ENCODE measurements at regions of chr5 and their contacts with region 1.

Region 1: GRCh38 chr5:34474573-34475021 is 181.5 kb upstream of the RAI14 start:
- DNase-seq: peak; percentile 77
- ATAC-seq: peak; percentile 99
- H3K4me3 ChIP-seq: no peak overlapping the region
- H3K27ac ChIP-seq: no peak overlapping the region
- H3K4me1 ChIP-seq: no peaks in the 10 kb centered on the region
- H3K27me3 ChIP-seq: peaks cover 16% of the 10 kb centered on the region
- CTCF ChIP-seq: peak; percentile 94
- POLR2A ChIP-seq: peak; percentile 45; the same call in 1 of the 2 replicates
- RAD21 ChIP-seq: peak; percentile 96

Region 2: DNA sequence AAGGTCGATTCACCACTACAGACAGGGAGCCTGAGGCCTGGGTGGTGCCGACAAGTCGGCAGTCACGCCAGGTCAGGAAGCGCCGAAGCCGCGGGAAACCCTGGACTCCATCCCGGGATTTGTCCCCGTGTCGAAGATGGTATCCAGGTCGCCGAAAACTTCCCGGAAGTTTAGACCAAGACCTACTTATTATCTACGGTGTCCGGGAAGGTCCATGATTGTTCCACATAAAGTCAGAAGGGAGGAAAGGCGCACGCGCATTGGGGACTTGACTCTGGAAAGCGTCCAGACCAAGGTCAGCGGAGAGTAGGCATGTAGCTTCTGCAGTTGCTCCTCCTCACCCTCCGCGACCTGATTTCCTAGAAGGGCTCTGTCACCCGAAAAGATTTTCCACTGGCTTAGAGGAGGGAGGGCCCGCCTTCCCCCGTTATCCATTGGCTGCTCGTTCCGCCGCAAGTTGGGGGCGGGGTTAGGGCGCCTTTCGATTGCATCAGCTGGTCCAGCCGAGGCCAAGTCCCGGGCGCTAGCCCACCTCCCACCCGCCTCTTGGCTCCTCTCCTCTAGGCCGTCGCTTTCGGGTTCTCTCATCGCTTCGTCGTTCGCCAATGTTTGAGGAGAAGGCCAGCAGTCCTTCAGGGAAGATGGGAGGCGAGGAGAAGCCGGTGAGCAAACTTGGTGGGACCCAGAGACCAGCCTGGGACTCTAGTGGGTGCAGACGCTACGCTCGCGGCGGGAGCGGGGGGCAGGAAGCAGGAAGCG is 1033.9 kb before region 1 on chr5 and contains the start of gene TARS1:
- CTCF ChIA-PET with region 1: no interaction called
- POLR2A ChIA-PET with region 1: no interaction called
- dilution Hi-C with region 1: no loop called
- in situ Hi-C with region 1: loop called (anchors 25 kb)
- intact Hi-C with region 1: no loop called
- DNase-seq: peak; percentile 100
- ATAC-seq: peak; percentile 94
- H3K4me3 ChIP-seq: peak within 1 kb of the TSS; percentile 68
- H3K27ac ChIP-seq: peak within 1 kb of the TSS; percentile 97
- H3K4me1 ChIP-seq: peaks cover 2% of the 10 kb centered on the region; the same call in 1 of the 2 replicates
- H3K27me3 ChIP-seq: no peaks in the 10 kb centered on the region
- CTCF ChIP-seq: no peak
- POLR2A ChIP-seq: peak; percentile 91
- RAD21 ChIP-seq: no peak
- total RNA-seq, gene TARS1: 175 and 219 TPM in 2 replicates

Region 3: GRCh38 chr5:34674187-34674586 is 199.6 kb after region 1 on chr5:
- CTCF ChIA-PET with region 1: no interaction called
- POLR2A ChIA-PET with region 1: no interaction called
- dilution Hi-C with region 1: no loop called
- in situ Hi-C with region 1: no loop called
- intact Hi-C with region 1: no loop called
- DNase-seq: peak; percentile 98
- ATAC-seq: peak; percentile 55
- H3K4me3 ChIP-seq: no peak overlapping the region
- H3K27ac ChIP-seq: peak overlapping the region; percentile 80; the same call in 1 of the 2 replicates
- H3K4me1 ChIP-seq: peaks cover 36% of the 10 kb centered on the region
- H3K27me3 ChIP-seq: no peaks in the 10 kb centered on the region
- CTCF ChIP-seq: no peak
- POLR2A ChIP-seq: no peak
- RAD21 ChIP-seq: no peak

Region 4: GRCh38 chr5:34811706-34812105 is 337.1 kb after region 1 on chr5:
- CTCF ChIA-PET with region 1: no interaction called
- POLR2A ChIA-PET with region 1: no interaction called
- dilution Hi-C with region 1: no loop called
- in situ Hi-C with region 1: no loop called
- intact Hi-C with region 1: no loop called
- DNase-seq: no peak
- ATAC-seq: no peak
- H3K4me3 ChIP-seq: no peak overlapping the region
- H3K27ac ChIP-seq: no peak overlapping the region
- H3K4me1 ChIP-seq: no peaks in the 10 kb centered on the region
- H3K27me3 ChIP-seq: no peaks in the 10 kb centered on the region
- CTCF ChIP-seq: no peak
- POLR2A ChIP-seq: no peak
- RAD21 ChIP-seq: no peak

Region 5: DNA sequence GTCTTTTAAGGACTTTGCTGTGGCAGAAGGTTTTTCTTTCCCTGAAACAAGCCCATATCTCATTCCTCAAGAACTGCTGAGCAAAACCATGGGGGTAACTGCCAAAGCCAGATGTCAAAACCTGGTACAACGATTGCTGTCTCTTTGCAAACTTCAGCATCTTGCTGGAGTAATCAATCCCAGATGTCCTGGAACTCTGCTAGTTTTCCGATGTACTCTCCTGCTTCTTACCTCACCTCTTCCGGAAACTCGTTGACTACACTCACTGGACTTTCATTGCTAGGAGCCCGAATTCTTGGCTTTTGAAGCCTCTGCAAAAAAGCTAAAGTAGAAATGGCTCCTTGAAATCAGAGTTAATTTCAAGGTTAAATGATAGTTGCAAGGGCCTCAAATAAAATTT is 417.4 kb after region 1 on chr5:
- CTCF ChIA-PET with region 1: interaction called, 3 read pairs
- POLR2A ChIA-PET with region 1: no interaction called
- dilution Hi-C with region 1: no loop called
- in situ Hi-C with region 1: loop called (anchors 5 kb)
- intact Hi-C with region 1: no loop called
- DNase-seq: peak; percentile 38
- ATAC-seq: no peak
- H3K4me3 ChIP-seq: no peak overlapping the region
- H3K27ac ChIP-seq: no peak overlapping the region
- H3K4me1 ChIP-seq: no peaks in the 10 kb centered on the region
- H3K27me3 ChIP-seq: peaks cover 2% of the 10 kb centered on the region; the same call in 1 of the 2 replicates
- CTCF ChIP-seq: no peak
- POLR2A ChIP-seq: no peak
- RAD21 ChIP-seq: no peak

Region 6: DNA sequence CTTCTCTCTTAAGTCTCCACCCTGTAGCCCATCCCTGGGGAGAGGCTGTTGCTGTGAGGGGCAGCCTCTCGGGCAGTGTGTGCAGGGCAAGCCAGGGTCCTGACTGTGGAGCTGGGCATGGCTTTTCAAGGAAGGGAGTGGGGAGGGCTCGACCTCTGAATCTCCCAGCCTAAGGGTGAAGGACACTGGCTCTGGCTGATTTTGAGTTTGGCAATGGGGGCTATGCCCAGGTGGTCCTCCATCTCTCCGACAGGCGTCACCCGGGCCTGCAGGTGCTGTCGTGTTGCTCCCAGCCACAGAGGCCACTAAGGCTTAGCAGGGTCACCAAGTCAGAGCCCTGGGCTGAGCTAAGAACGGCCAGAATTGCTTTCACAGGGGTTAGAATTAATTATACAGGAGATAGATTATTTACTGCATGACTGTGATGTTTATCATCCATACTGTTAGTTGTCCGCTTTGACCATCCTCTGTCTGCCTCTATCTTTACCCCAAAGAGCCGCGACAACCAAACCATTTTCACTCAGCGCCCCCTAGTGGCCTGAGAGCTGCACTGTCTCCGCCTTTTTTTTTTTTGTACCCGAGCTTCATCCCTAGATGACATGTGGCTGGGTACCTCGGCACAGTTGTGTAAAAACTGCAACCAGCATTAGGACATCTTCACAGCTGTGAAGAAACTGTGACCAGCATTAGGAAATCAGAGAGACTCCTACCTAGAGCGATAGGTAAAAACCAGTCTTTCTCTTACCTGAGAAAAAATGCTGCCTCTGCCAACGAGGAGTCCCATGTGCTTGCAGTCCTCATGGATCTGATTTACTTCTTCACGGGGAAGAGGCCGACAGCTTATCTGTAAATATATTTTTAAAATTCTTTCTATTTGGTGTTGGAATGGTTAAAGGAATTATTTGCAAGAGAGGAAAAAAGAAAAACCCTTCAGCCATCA is 528.7 kb after region 1 on chr5:
- CTCF ChIA-PET with region 1: no interaction called
- POLR2A ChIA-PET with region 1: no interaction called
- dilution Hi-C with region 1: no loop called
- in situ Hi-C with region 1: loop called (anchors 10 kb)
- intact Hi-C with region 1: loop called (anchors 2 kb)
- DNase-seq: peak; percentile 46
- ATAC-seq: peak; percentile 89
- H3K4me3 ChIP-seq: no peak overlapping the region
- H3K27ac ChIP-seq: no peak overlapping the region
- H3K4me1 ChIP-seq: 0 out of 2 replicates have a peak, but pooled peaks cover 2% of the 10 kb centered on the region
- H3K27me3 ChIP-seq: peaks cover 19% of the 10 kb centered on the region
- CTCF ChIP-seq: peak; percentile 85
- POLR2A ChIP-seq: no peak
- RAD21 ChIP-seq: peak; percentile 73

Measured in IMR-90 (cell line).